Naive thymus-derived CD4-positive, alpha-beta T cell (primary cell): ENCODE measurements at regions of chr4 and their contacts with region 1.

Region 1: DNA sequence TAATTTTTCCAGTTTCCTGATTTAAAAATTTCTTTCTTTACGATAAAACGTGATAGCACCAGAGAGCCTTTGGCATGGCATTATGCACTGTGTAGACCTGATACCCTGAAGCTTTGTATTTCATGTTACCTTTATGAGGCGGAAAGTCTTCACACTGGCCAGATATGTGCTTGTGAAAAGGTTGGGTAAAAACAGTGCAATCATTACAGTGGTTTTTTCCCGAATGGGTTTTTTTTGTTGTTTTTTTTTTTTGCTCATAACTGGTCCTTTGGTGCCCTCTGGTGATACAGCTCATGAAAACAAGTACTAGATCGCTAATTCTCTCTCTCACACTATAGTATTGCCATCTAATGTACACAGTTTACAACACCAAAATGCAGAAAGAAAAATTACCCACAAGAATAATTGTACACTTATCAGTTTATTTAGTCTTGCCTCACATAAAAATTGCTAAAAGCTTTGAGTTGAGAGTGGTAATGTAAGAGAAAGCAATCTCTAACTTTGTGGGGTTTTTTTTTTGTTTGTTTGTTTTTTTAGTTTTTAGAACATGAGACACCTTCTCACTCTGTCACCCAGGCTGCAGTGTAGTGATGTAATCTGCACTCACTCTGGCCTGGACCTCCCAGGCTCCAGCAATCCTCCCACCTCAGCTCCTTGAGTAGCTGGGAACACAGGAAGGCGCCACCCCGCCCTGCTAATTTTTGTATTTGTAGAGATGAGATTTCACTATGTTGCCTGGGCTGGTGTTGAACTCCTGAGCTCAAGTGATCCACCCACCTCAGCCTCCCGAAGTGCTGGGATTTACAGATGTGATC is 21.3 kb downstream of the SPCS3 start:
- DNase-seq: peak in 5 of 9 donors; percentile 37 to 52 (median 39)
- ATAC-seq: peak; percentile 73
- H3K4me3 ChIP-seq: no peak overlapping the region
- H3K4me3 Mint-ChIP-seq: no peak overlapping the region
- H3K27ac ChIP-seq: no peak overlapping the region
- H3K27ac Mint-ChIP-seq: no peak overlapping the region
- H3K4me1 ChIP-seq: peaks cover 0 to 6% of the 10 kb centered on the region in 2 donors
- H3K4me1 Mint-ChIP-seq: peaks cover 0 to 24% (median 5%) of the 10 kb centered on the region in 7 donors
- H3K27me3 ChIP-seq: no peaks in the 10 kb centered on the region
- H3K27me3 Mint-ChIP-seq: no peaks in the 10 kb centered on the region

Region 2: DNA sequence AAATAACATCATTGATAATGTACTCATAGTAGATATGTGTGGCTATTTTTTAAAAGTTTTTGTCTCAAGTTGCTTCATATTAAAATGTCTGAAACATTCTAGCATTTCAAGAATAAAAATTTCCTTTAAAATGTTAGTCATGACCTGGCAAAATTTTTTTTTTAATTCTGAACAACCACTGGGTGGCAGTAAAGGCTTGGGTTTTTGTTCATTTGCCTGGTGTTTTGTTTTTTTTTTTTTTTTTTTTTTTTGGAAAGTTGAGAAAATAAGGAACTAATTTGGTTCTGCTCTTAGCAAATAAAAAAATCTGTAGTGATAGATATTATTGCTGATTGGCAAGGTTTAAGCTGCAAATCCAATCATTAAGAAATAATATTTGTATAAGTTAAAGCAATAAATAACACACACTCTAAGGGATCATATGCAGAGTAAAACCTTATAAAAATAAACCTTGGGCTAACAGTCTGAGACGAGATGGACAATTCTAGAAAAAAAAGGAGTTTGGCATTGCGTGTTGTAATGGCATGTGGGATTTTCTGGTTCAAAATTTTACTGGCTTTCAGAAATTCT is 1976.0 kb before region 1 on chr4:
- CTCF ChIA-PET with region 1: no interaction called
- POLR2A ChIA-PET with region 1: no interaction called
- intact Hi-C with region 1: loop called in 1 of 2 experiments (anchors 2 kb)
- DNase-seq: peak in 5 of 9 donors; percentile 2 to 31 (median 15)
- ATAC-seq: no peak
- H3K4me3 ChIP-seq: no peak overlapping the region
- H3K4me3 Mint-ChIP-seq: no peak overlapping the region
- H3K27ac ChIP-seq: no peak overlapping the region
- H3K27ac Mint-ChIP-seq: no peak overlapping the region
- H3K4me1 ChIP-seq: no peaks in the 10 kb centered on the region
- H3K4me1 Mint-ChIP-seq: no peaks in the 10 kb centered on the region
- H3K27me3 ChIP-seq: peaks cover 0 to 2% of the 10 kb centered on the region in 2 donors
- H3K27me3 Mint-ChIP-seq: peaks cover 0 to 16% (median 0%) of the 10 kb centered on the region in 5 donors

Region 3: DNA sequence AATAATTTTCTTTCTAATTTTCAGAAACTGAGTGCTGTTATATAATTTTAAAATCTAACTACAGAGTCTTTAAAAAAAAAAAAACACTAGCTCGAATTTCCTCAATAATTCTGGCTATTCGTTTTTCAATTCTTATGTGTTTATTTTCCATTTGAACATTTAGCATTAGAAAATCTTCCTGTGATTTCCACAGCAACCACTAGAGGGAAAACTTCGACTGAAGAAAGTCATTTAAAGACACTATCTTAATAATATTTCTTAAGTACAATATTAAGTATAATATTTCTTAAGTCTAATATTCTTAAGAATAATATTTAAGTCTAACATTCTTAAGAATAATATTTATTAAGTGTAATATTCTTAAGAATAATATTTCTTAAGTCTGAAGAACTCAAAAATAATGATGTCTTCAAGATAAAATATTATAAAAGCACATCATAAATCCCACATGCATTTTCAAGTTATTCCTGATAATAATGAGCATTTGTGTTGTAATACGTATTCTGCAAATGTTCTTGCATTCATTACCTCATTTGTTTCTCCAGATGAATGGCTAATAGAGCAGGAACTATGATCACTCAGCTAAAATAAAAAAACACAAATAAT is 393.9 kb before region 1 on chr4:
- CTCF ChIA-PET with region 1: interaction called, 7 read pairs
- POLR2A ChIA-PET with region 1: no interaction called
- intact Hi-C with region 1: loop called (anchors 1 kb)
- DNase-seq: peak in 3 of 9 donors; percentile 1 to 8 (median 4)
- ATAC-seq: no peak
- H3K4me3 ChIP-seq: no peak overlapping the region
- H3K4me3 Mint-ChIP-seq: peak overlapping the region in 1 of 10 donors; percentile 44
- H3K27ac ChIP-seq: no peak overlapping the region
- H3K27ac Mint-ChIP-seq: no peak overlapping the region
- H3K4me1 ChIP-seq: peaks cover 0 to 3% of the 10 kb centered on the region in 2 donors
- H3K4me1 Mint-ChIP-seq: peaks cover 0 to 10% (median 6%) of the 10 kb centered on the region in 7 donors
- H3K27me3 ChIP-seq: no peaks in the 10 kb centered on the region
- H3K27me3 Mint-ChIP-seq: peaks cover 10 to 27% (median 13%) of the 10 kb centered on the region in 5 donors

Region 4: DNA sequence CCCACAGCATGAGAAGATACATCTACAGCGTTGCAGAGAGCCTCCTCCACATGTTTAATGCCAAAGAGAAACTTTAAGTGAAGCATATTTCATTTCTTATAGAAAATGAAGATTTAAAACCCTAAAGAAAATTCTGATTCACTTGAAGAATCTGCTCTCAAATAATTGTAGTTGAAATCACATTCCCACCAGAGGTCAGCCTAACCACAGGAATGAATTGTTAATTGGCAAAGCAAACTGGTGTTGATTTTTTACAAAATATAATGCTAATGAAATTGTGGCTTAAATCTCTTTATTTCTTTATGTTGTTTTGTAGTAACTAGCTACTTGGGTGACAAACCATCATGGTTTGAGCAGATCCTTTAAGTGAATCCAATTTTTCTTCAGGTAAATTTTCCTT is 306.6 kb before region 1 on chr4:
- CTCF ChIA-PET with region 1: interaction called, 4 read pairs
- POLR2A ChIA-PET with region 1: no interaction called
- intact Hi-C with region 1: loop called (anchors 1 kb)
- DNase-seq: peak in 5 of 9 donors; percentile 8 to 40 (median 26)
- ATAC-seq: no peak
- H3K4me3 ChIP-seq: no peak overlapping the region
- H3K4me3 Mint-ChIP-seq: no peak overlapping the region
- H3K27ac ChIP-seq: no peak overlapping the region
- H3K27ac Mint-ChIP-seq: no peak overlapping the region
- H3K4me1 ChIP-seq: no peaks in the 10 kb centered on the region
- H3K4me1 Mint-ChIP-seq: no peaks in the 10 kb centered on the region
- H3K27me3 ChIP-seq: no peaks in the 10 kb centered on the region
- H3K27me3 Mint-ChIP-seq: peaks cover 0 to 11% (median 0%) of the 10 kb centered on the region in 5 donors

Region 5: DNA sequence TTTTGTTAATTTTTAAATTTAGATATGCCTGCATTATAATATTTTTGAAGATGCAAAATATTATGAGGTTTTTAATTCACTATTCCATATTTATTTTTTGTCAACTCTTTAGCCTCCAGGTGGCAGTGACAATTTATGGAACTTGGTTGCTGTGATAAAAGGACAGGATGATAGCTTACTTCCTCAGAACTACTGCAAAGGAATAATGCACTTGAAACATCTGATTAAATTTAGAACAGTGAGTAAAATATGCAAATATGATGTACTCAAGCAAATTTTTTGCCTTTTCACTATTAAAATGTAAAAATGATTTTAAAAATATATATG is 190.8 kb before region 1 on chr4:
- CTCF ChIA-PET with region 1: no interaction called
- POLR2A ChIA-PET with region 1: no interaction called
- intact Hi-C with region 1: loop called (anchors 1 kb)
- DNase-seq: peak in 1 of 9 donors; percentile 1
- ATAC-seq: no peak
- H3K4me3 ChIP-seq: no peak overlapping the region
- H3K4me3 Mint-ChIP-seq: no peak overlapping the region
- H3K27ac ChIP-seq: no peak overlapping the region
- H3K27ac Mint-ChIP-seq: no peak overlapping the region
- H3K4me1 ChIP-seq: no peaks in the 10 kb centered on the region
- H3K4me1 Mint-ChIP-seq: no peaks in the 10 kb centered on the region
- H3K27me3 ChIP-seq: no peaks in the 10 kb centered on the region
- H3K27me3 Mint-ChIP-seq: no peaks in the 10 kb centered on the region

Region 6: DNA sequence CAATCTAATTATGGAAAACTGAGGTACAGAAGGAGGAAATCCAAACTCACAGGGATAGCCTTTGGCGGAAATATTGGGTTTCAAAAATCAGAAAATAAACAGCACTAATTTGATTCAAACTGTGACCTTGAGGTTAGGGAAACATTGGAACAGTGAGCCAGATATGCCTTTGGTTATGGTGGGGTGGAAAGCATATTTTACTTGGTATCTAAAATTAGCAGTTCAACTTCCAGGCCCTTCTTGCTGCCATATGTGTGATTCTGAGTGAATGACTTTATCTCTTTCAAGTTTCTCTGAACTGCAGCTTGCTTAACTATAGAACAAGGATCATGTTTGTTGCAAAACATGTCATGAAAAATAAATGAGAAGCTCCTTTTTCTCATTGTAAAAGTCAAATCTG is 692.6 kb after region 1 on chr4:
- CTCF ChIA-PET with region 1: no interaction called
- POLR2A ChIA-PET with region 1: no interaction called
- intact Hi-C with region 1: no loop called
- DNase-seq: no peak
- ATAC-seq: no peak
- H3K4me3 ChIP-seq: no peak overlapping the region
- H3K4me3 Mint-ChIP-seq: no peak overlapping the region
- H3K27ac ChIP-seq: no peak overlapping the region
- H3K27ac Mint-ChIP-seq: no peak overlapping the region
- H3K4me1 ChIP-seq: no peaks in the 10 kb centered on the region
- H3K4me1 Mint-ChIP-seq: no peaks in the 10 kb centered on the region
- H3K27me3 ChIP-seq: no peaks in the 10 kb centered on the region
- H3K27me3 Mint-ChIP-seq: peaks cover 0 to 7% (median 0%) of the 10 kb centered on the region in 5 donors